ENCODE measurements at regions of chr3 and their contacts with region 1.

Region 1: DNA sequence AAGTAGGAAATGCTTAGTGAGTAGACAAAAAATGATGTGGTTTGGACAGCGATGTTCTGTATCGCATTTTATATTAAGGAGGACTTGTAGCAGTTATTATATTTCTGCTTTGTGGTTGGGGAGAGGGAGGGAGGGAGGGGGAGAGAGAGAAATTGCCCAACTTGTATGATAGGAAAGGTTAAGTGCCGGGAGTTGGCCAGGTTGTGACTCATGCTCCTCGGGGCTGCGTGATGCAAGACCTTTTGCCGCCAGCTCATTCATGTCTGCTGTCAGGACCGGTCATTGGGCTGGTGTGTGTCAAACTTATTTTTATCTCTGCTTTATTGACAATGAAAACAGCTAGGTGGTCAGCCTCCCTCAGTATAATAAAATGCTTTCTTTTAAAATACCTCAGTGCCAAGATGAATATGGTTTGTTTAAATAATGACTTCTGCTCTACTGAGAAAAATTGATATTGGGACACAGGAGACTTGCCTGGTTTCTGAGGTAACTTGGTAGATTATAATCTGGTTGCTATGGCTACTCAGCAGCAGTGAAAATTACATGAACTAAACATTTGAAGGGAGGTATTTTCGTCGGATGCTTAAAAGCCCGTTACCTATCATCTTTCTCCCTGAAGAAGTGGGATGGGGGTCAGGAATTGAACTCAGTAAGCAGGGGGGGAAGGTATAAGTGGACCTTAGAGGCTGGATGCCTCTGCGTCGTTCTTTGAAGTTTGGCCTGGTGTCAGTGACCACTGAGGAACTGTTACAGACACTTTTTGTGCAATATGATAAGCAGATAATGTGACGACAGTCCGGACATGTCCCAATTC is 90.7 kb downstream of the FNDC3B start:
- DNase-seq: peak; percentile 81
- H3K4me3 Mint-ChIP-seq: peak overlapping the region; percentile 17
- H3K27ac Mint-ChIP-seq: peak overlapping the region; percentile 64
- H3K4me1 Mint-ChIP-seq: peaks cover 53% of the 10 kb centered on the region
- H3K27me3 Mint-ChIP-seq: no peaks in the 10 kb centered on the region

Region 2: GRCh38 chr3:171428321-171428787 is 701.7 kb before region 1 on chr3:
- CTCF ChIA-PET with region 1: no interaction called
- POLR2A ChIA-PET with region 1: no interaction called
- intact Hi-C with region 1: no loop called
- DNase-seq: no peak
- H3K4me3 Mint-ChIP-seq: no peak overlapping the region
- H3K27ac Mint-ChIP-seq: no peak overlapping the region
- H3K4me1 Mint-ChIP-seq: peaks cover 5% of the 10 kb centered on the region
- H3K27me3 Mint-ChIP-seq: no peaks in the 10 kb centered on the region

Region 3: GRCh38 chr3:172074586-172074985 is 55.5 kb before region 1 on chr3:
- CTCF ChIA-PET with region 1: no interaction called
- POLR2A ChIA-PET with region 1: no interaction called
- intact Hi-C with region 1: no loop called
- DNase-seq: no peak
- H3K4me3 Mint-ChIP-seq: no peak overlapping the region
- H3K27ac Mint-ChIP-seq: no peak overlapping the region
- H3K4me1 Mint-ChIP-seq: no peaks in the 10 kb centered on the region
- H3K27me3 Mint-ChIP-seq: no peaks in the 10 kb centered on the region

Region 4: DNA sequence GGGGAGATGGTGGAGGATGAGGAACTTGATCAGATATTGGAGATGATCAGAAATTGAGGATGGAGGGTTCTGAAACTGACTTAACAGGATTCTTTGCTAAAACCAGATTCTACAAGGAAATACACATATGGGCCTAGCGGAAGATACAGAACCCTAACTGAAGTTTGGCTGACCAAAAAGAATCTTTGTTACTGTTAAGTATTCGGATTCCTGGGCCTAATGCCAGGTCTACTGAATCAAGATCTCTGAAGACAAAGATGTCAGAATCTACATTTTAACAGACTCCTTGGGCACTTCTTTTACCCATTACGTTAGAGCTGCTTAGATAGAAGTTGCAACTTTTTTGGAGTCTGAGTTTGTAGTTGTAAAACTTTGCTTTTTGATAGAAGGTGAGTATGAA is 47.0 kb after region 1 on chr3:
- CTCF ChIA-PET with region 1: no interaction called
- POLR2A ChIA-PET with region 1: no interaction called
- intact Hi-C with region 1: no loop called
- DNase-seq: no peak
- H3K4me3 Mint-ChIP-seq: no peak overlapping the region
- H3K27ac Mint-ChIP-seq: no peak overlapping the region
- H3K4me1 Mint-ChIP-seq: peaks cover 16% of the 10 kb centered on the region
- H3K27me3 Mint-ChIP-seq: no peaks in the 10 kb centered on the region

Region 5: DNA sequence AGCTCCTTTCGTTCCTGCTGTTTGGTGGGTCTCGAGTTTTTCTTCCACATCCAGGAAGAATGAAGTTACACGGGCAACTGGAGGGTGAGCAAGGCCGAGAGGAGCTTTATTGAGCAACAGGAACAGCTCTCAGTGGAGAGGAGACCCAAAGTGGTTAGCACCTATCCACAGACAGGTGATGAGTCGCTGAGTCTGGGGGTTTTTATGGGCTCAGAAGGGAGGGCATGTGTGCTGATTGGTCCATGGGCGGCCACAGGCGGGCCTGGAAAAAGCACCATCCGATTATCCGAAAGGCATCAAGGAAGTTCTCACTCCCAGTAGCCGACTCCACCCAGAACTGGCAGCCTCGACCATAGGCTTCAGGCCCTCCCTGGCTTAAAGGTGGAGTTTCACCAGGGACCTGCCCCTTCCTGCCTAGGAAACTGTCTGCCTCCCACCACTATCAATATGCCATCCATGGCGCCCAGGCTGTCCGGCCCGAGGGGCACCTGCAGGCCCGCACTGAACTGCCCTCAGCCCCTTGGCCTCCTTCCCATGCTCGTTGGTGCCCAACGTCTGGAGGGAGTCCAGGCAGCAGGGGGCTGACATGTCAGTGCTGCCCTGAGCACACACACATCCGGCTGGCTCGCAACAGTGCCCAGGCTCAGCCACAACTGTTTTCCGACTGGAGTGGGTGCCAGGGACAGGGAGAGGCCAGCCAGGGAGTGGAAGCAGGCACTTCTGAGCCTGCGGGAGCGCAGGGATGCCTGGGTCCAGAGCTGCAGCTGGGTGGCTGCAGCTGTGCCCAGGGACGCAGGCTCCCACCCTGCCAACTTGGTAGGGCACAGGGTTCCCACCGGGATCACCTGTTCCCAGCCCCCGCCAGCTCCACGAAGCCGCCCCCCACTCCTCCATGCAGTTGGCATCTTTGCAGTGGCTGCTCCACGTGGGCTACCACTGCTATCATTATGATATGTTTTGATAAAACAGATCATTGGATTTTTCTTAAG is 79.5 kb after region 1 on chr3:
- CTCF ChIA-PET with region 1: no interaction called
- POLR2A ChIA-PET with region 1: no interaction called
- intact Hi-C with region 1: loop called (anchors 5 kb)
- DNase-seq: no peak
- H3K4me3 Mint-ChIP-seq: no peak overlapping the region
- H3K27ac Mint-ChIP-seq: no peak overlapping the region
- H3K4me1 Mint-ChIP-seq: peaks cover 16% of the 10 kb centered on the region
- H3K27me3 Mint-ChIP-seq: no peaks in the 10 kb centered on the region

Region 6: GRCh38 chr3:172249039-172249438 is 119.0 kb after region 1 on chr3:
- CTCF ChIA-PET with region 1: no interaction called
- POLR2A ChIA-PET with region 1: no interaction called
- intact Hi-C with region 1: loop called (anchors 5 kb)
- DNase-seq: no peak
- H3K4me3 Mint-ChIP-seq: no peak overlapping the region
- H3K27ac Mint-ChIP-seq: no peak overlapping the region
- H3K4me1 Mint-ChIP-seq: peaks cover 15% of the 10 kb centered on the region
- H3K27me3 Mint-ChIP-seq: no peaks in the 10 kb centered on the region

Region 7: DNA sequence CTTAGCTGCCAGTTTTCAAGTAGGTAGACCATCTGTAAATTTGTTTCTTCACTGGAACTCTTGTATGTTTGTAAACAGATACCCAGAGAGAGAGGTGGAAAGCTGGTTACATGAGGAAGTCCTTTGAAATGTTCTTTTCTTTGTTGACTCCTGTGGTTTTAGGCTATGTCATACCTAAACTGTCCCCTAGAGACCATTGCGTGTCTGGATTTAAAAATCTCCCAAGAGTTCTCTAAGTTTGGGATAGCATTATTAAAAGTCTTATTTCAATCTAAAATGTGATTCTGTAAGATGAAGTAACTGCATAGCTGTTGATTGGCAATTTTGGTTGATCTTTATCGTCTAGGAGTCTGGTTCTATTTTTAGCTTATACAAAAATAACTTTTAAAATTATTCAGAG is 191.0 kb after region 1 on chr3:
- CTCF ChIA-PET with region 1: no interaction called
- POLR2A ChIA-PET with region 1: no interaction called
- intact Hi-C with region 1: loop called (anchors 10 kb)
- DNase-seq: no peak
- H3K4me3 Mint-ChIP-seq: no peak overlapping the region
- H3K27ac Mint-ChIP-seq: no peak overlapping the region
- H3K4me1 Mint-ChIP-seq: peaks cover 25% of the 10 kb centered on the region
- H3K27me3 Mint-ChIP-seq: no peaks in the 10 kb centered on the region

Region 8: DNA sequence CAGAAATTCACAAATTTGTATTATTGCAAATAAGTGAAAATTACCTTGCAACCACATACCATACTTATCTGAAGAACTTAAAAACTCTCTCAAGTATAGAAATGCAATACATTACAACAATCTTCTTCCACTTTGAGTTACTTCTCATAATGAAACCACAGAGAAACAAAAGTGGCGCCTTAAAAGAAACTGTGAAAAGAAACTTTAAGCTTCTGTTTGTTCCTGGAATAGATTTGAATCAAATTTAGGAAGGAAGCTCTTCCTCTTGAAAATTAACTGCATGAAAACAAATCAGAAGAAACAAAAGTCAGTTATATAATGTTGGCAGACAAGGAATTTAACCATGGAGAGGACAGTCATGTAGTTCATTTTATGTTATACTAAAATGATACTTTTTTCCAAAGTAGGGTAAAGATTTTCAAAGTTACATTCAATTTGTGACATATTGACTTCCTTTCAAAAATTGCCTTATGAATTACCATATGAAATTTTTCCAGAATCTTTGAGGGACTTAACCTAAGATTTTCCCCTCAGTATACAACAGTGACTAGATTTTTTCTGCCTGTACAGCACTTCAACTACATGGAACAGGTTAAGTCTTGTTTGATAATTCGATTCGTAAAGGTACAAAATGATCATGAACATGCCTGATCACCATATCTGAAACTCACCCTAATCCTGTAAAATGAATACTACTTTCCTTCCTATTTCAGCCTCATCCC is 450.8 kb after region 1 on chr3:
- CTCF ChIA-PET with region 1: no interaction called
- POLR2A ChIA-PET with region 1: no interaction called
- intact Hi-C with region 1: loop called (anchors 10 kb)
- DNase-seq: no peak
- H3K4me3 Mint-ChIP-seq: peak overlapping the region; percentile 18
- H3K27ac Mint-ChIP-seq: peak overlapping the region; percentile 68
- H3K4me1 Mint-ChIP-seq: peaks cover 78% of the 10 kb centered on the region
- H3K27me3 Mint-ChIP-seq: peaks cover 2% of the 10 kb centered on the region

Region 9: DNA sequence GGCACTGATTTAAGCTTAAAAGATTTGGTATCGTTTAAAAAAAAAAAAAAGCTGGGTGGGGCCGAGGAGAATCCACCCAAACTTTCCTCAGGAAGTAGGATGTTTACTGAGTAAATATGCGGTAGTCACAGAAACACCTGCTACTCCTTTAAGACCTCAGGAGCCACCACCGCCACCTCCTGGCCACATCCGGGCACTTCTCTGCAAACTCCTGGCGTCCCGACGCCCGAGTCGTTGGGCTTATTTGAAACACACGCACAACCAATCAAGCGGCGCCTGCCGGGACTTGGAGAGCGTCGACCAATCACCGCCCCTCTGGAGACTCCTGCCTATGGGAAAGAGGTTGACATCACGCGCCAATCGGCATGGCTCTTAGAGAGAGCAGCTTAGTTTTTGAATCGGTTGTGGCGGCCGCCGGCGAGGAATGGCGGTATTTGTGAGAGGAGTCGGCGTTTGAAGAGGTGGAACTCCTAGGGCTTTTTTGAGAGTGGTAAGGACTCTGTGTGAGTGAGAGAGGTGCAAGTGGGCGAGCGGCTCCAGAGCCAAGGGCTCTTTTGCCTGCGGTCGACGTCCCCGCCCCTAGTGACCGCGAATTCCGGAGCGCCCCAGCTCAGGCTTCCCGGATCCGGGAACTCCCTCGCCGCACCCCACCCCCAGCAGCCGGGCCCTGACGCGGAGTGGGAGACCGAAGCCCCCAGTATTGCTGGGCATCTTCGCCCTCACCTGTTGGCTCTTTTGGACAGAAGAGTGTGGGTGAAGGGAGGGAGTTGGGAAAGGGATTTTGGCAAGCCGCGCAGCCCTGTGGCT is 620.5 kb after region 1 on chr3 and contains the start of gene ECT2:
- CTCF ChIA-PET with region 1: no interaction called
- POLR2A ChIA-PET with region 1: no interaction called
- intact Hi-C with region 1: loop called (anchors 10 kb)
- DNase-seq: peak; percentile 99
- H3K4me3 Mint-ChIP-seq: peak within 1 kb of the TSS; percentile 87
- H3K27ac Mint-ChIP-seq: peak within 1 kb of the TSS; percentile 87
- H3K4me1 Mint-ChIP-seq: peaks cover 22% of the 10 kb centered on the region
- H3K27me3 Mint-ChIP-seq: peaks cover 1% of the 10 kb centered on the region
- total RNA-seq, gene ECT2: 48.2 to 52.8 TPM

Measured in activated CD4-positive, alpha-beta memory T cell treated with anti-CD3 and anti-CD28 coated beads for 36 hours (primary cell).